HEK293 (cell line): ENCODE measurements at regions of chr15 and their contacts with region 1.

Region 1: DNA sequence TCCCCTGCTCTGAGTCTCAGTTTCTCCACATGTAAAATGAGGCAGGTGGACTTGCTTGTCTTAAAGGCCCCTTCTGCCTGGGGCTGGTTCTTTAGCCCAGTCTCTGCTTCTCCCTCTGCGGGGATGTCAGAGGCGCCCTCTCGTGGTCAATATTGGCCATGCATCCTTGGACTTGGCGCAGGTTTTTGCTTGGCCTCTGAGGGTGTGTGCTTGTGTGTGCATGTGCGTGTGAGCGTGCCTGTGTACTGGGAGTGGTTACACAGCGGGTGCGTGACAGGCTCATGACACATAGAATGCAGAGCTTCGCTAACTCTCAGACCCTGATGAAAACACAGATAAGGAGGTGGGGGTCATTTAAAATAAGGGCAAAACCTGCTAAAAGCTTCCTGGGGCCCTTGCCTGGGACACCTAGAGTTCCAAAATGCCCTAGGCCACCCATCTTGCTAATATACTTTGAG is 160.9 kb downstream of the SMAD6 start:
- H3K4me3 ChIP-seq: no peak overlapping the region
- H3K27ac ChIP-seq: no peak overlapping the region
- H3K4me1 ChIP-seq: no peaks in the 10 kb centered on the region
- CTCF ChIP-seq: peak; percentile 95

Region 2: GRCh38 chr15:66789029-66790025 is 73.6 kb before region 1 on chr15:
- CTCF ChIA-PET with region 1: interaction called, 10 read pairs
- POLR2A ChIA-PET with region 1: no interaction called
- H3K4me3 ChIP-seq: no peak overlapping the region
- H3K27ac ChIP-seq: no peak overlapping the region
- H3K4me1 ChIP-seq: no peaks in the 10 kb centered on the region
- CTCF ChIP-seq: peak; percentile 56

Region 3: DNA sequence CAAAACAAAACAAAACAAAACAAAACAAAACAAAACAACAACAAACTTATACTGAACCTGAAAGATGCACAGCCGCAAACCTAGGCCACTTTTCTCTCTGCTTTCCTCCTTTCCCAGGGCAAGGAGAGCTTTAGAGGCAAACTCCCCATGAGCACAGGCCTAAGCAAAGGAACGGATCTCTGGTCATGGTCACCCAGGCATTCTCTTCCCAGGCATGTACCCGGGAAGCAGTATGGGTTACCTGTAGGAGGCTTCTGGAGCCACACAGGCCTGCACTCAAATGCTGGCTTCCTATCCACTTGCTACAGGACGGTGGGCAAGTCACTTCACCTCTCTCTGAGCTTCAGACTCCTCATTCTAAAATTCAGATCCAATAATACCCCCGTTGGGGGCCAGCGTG is 10.9 kb after region 1 on chr15:
- CTCF ChIA-PET with region 1: interaction called, 12 read pairs
- POLR2A ChIA-PET with region 1: no interaction called
- H3K4me3 ChIP-seq: no peak overlapping the region
- H3K27ac ChIP-seq: no peak overlapping the region
- H3K4me1 ChIP-seq: peaks cover 13% of the 10 kb centered on the region
- CTCF ChIP-seq: no peak

Region 4: DNA sequence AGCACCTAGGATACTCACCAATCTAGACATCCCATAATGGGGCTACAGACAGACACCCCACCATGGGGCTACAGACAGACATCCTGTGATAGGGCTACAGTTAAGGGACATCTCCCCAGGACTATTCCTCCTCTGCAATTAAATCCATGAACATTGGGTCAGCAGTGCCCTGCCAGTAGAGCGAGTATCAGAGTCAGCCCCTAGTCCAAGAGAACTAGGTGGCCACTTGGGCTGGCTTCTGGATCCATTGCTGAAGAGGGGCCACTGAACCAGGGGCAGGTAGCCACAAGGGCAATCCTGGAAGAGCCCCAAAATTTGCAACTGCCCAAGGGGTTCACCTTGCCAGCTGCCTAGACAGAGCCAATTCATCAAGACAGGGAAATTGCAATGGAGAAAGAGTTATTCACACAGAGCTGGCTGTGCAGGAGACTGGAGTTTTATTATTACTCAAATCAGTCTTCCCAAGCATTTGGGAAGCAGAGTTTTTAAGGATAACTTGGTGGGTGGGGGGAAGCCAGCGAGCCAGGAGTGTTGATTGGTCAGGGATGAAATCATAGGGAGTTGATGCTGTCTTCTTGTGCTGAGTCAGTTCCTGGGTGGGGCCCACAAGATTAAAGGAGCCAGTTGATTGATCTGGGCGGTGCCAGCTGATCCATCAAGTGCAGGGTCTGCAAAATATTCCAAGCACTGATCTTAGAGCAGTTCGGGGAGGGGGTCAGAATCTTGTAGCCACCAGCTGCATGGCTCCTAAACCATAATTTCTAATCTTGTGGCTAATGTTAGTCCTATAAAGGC is 32.3 kb after region 1 on chr15:
- CTCF ChIA-PET with region 1: interaction called, 83 read pairs
- POLR2A ChIA-PET with region 1: no interaction called
- H3K4me3 ChIP-seq: no peak overlapping the region
- H3K27ac ChIP-seq: no peak overlapping the region
- H3K4me1 ChIP-seq: peaks cover 4% of the 10 kb centered on the region; the same call in 1 of the 2 replicates
- CTCF ChIP-seq: no peak